B cell (primary cell): ENCODE measurements at regions of chr6 and their contacts with region 1.

Region 1: DNA sequence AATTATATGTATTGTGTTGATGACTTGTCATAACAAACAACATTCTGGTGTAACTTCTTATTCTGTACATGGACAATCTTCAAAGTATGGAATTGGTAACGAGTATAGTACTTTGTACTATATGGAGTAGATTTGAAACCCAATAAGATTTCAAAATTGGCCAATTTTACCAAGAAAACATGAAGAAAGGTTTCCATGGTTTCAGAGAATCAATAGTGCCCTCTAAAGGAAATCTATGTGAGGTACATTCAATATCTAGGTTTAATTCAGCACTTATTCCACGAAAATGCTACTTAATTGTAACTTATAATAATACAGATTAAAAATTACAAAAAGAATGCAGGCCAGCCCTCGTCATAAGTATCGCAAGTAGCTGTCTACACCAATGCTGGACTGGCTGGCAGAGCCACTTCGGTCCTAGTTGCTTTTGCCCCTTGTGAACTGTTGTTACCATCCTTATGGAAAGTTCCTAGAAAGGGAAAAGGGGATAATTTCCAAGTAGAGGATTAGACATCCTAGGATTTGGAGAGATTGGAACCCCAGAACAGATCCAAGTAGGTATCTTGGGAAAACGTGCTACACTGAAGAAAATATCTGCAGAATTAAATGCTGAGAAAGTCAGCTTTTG is 70.9 kb downstream of the LCA5 start:
- DNase-seq: no peak
- ATAC-seq: no peak
- H3K4me3 ChIP-seq: no peak overlapping the region
- H3K4me3 Mint-ChIP-seq: no peak overlapping the region
- H3K27ac ChIP-seq: no peak overlapping the region
- H3K27ac Mint-ChIP-seq: no peak overlapping the region
- H3K4me1 ChIP-seq: no peaks in the 10 kb centered on the region
- H3K4me1 Mint-ChIP-seq: no peaks in the 10 kb centered on the region
- H3K27me3 ChIP-seq: no peaks in the 10 kb centered on the region
- H3K27me3 Mint-ChIP-seq: peaks cover 7% of the 10 kb centered on the region
- CTCF ChIP-seq: peak; percentile 30

Region 2: DNA sequence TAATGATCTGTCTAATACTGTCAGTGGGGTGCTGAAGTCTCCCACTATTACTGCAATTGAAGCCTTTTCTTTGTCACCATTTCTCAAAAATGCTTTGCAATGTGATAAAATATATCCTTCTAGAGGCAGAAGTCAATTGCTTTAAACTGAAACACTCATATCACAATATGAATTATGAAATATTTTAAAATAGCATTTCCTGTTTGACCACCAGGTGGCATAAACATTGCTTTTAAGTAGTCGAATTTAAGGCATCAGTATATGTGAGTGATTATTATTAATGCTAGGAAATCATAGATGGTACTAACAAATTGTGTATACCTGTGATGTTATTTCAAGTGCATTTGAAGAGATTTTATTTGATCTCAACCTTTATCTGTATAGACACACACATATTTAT is 1725.9 kb before region 1 on chr6:
- CTCF ChIA-PET with region 1: no interaction called
- POLR2A ChIA-PET with region 1: no interaction called
- intact Hi-C with region 1: loop called (anchors 5 kb)
- DNase-seq: peak; percentile 7
- ATAC-seq: no peak
- H3K4me3 ChIP-seq: no peak overlapping the region
- H3K4me3 Mint-ChIP-seq: no peak overlapping the region
- H3K27ac ChIP-seq: no peak overlapping the region
- H3K27ac Mint-ChIP-seq: no peak overlapping the region
- H3K4me1 ChIP-seq: no peaks in the 10 kb centered on the region
- H3K4me1 Mint-ChIP-seq: no peaks in the 10 kb centered on the region
- H3K27me3 ChIP-seq: no peaks in the 10 kb centered on the region
- H3K27me3 Mint-ChIP-seq: no peaks in the 10 kb centered on the region
- CTCF ChIP-seq: peak; percentile 36

Region 3: GRCh38 chr6:79307321-79308036 is 158.8 kb before region 1 on chr6:
- CTCF ChIA-PET with region 1: no interaction called
- POLR2A ChIA-PET with region 1: no interaction called
- intact Hi-C with region 1: no loop called
- DNase-seq: no peak
- ATAC-seq: no peak
- H3K4me3 ChIP-seq: no peak overlapping the region
- H3K4me3 Mint-ChIP-seq: no peak overlapping the region
- H3K27ac ChIP-seq: no peak overlapping the region
- H3K27ac Mint-ChIP-seq: no peak overlapping the region
- H3K4me1 ChIP-seq: no peaks in the 10 kb centered on the region
- H3K4me1 Mint-ChIP-seq: no peaks in the 10 kb centered on the region
- H3K27me3 ChIP-seq: no peaks in the 10 kb centered on the region
- H3K27me3 Mint-ChIP-seq: no peaks in the 10 kb centered on the region
- CTCF ChIP-seq: no peak

Region 4: GRCh38 chr6:79453558-79454042 is 12.7 kb before region 1 on chr6:
- CTCF ChIA-PET with region 1: no interaction called
- POLR2A ChIA-PET with region 1: no interaction called
- intact Hi-C with region 1: no loop called
- DNase-seq: no peak
- ATAC-seq: no peak
- H3K4me3 ChIP-seq: no peak overlapping the region
- H3K4me3 Mint-ChIP-seq: no peak overlapping the region
- H3K27ac ChIP-seq: no peak overlapping the region
- H3K27ac Mint-ChIP-seq: no peak overlapping the region
- H3K4me1 ChIP-seq: no peaks in the 10 kb centered on the region
- H3K4me1 Mint-ChIP-seq: no peaks in the 10 kb centered on the region
- H3K27me3 ChIP-seq: no peaks in the 10 kb centered on the region
- H3K27me3 Mint-ChIP-seq: no peaks in the 10 kb centered on the region
- CTCF ChIP-seq: no peak